Psoas muscle (tissue), 8 donors: ENCODE measurements at regions of chr4 and their contacts with region 1.

Region 1: DNA sequence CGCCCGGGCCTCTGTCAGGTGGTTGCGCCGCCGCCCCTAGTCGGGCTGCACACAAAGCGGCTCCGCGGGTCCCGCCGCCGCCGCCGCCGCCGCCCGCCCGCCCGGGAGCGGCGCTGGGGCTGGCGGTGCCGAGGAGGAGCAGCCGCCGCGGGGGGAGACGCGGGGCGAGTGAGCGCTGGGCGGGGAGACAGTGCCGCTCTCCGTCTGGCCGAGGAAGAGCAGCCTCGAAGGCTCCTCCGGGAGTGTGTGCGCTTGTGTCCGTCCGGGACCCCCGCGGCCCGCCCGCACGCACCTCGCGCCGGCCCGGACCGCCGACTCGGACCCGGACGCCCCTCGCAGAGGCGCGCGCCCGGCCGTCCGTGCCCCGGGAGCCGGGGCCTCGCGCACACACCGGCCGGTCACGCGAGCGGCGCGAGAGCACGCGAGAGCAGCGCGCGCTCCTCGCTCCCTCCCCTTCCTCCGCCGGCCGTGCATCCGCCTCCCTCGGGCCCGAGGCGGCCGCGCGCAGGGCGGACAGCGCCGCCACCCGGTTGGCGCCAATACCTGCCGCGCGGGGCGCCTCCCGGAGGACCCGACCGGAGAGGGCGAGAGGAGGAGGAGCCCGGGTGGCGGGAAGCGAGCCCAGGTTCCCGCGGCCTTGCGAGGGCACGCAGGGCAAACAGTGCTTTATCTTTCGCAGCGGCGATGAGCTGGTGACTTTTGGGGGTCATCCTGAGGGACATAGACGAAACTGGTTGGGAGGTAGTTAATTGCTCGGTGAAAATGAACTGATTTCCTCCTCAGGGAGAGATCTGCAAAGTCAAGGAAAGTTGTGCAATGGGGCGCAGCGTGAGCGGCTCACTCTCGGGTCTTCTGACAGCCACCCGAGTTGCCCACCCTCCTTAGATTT is at the start of gene PDS5A:
- DNase-seq: peak; percentile 90 to 94
- ATAC-seq: peak; percentile 94
- H3K4me3 ChIP-seq: peak within 1 kb of the TSS; percentile 85
- H3K27ac ChIP-seq: peak within 1 kb of the TSS; percentile 84
- H3K4me1 ChIP-seq: peaks cover 18% of the 10 kb centered on the region
- H3K27me3 ChIP-seq: no peaks in the 10 kb centered on the region
- CTCF ChIP-seq: peak; percentile 75
- total RNA-seq, gene PDS5A: 23.2 to 34.0 (median 30.8) TPM

Region 2: DNA sequence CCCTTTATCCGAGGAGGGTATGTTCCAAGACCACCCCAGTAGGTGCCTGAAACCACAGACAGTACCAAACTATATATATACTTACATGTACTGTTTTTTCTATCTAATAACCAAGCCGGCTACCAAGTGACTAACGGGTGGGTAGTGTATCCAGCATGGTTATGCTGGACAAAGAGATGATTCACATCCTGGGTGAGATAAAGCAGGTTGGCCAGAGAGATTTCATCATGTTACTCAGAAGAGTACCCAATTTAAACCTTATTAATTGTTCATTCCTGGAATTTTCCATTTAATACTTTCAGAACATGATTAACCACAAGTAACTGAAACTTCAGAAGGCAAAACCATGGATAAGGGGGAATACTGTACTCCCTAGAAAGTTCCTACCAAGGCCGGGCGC is 658.1 kb before region 1 on chr4:
- intact Hi-C with region 1: no loop called
- DNase-seq: no peak
- ATAC-seq: no peak
- H3K4me3 ChIP-seq: no peak overlapping the region
- H3K27ac ChIP-seq: no peak overlapping the region
- H3K4me1 ChIP-seq: no peaks in the 10 kb centered on the region
- H3K27me3 ChIP-seq: no peaks in the 10 kb centered on the region
- CTCF ChIP-seq: no peak

Region 3: GRCh38 chr4:39527273-39528060 is 450.3 kb before region 1 on chr4 and contains the start of gene UGDH:
- intact Hi-C with region 1: loop called in 1 of 2 experiments (anchors 2 kb)
- DNase-seq: peak; percentile 97 to 98
- ATAC-seq: peak; percentile 98 to 99 (median 98)
- H3K4me3 ChIP-seq: peak within 1 kb of the TSS; percentile 81
- H3K27ac ChIP-seq: peak within 1 kb of the TSS; percentile 94
- H3K4me1 ChIP-seq: peaks cover 25% of the 10 kb centered on the region
- H3K27me3 ChIP-seq: no peaks in the 10 kb centered on the region
- CTCF ChIP-seq: no peak
- total RNA-seq, gene UGDH: 7.7 to 9.8 (median 8.9) TPM

Region 4: GRCh38 chr4:39697740-39698423 is 279.9 kb before region 1 on chr4 and contains the start of gene UBE2K:
- intact Hi-C with region 1: loop called (anchors 2 kb)
- DNase-seq: peak; percentile 91 to 95
- ATAC-seq: peak; percentile 94 to 98 (median 96)
- H3K4me3 ChIP-seq: peak within 1 kb of the TSS; percentile 85
- H3K27ac ChIP-seq: peak within 1 kb of the TSS; percentile 90
- H3K4me1 ChIP-seq: peaks cover 23% of the 10 kb centered on the region
- H3K27me3 ChIP-seq: no peaks in the 10 kb centered on the region
- CTCF ChIP-seq: no peak
- total RNA-seq, gene UBE2K: 45.9 to 75.9 (median 61.5) TPM

Region 5: DNA sequence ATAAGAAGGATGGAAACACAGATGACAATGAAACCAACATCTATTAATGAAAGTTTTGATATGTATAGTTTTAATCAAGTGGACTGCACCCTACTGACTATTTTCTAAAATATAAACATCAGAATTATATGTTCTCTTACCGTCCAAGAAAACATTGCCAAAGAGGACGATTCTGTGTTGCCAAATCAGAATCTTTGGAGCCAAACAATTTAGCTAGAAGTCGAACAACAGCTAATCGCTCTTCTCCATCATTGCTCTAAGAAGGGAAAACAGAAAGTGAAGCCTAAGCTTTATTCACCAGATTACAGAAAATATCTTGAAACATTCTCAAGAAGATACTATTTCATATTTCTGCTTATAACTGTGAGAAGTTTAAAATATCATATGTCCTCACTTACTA is 64.3 kb before region 1 on chr4:
- intact Hi-C with region 1: loop called in 1 of 2 experiments (anchors 10 kb)
- DNase-seq: no peak
- ATAC-seq: no peak
- H3K4me3 ChIP-seq: no peak overlapping the region
- H3K27ac ChIP-seq: no peak overlapping the region
- H3K4me1 ChIP-seq: no peaks in the 10 kb centered on the region
- H3K27me3 ChIP-seq: no peaks in the 10 kb centered on the region
- CTCF ChIP-seq: no peak

Region 6: GRCh38 chr4:39937683-39938268 is 40.0 kb before region 1 on chr4:
- intact Hi-C with region 1: no loop called
- DNase-seq: no peak
- ATAC-seq: no peak
- H3K4me3 ChIP-seq: no peak overlapping the region
- H3K27ac ChIP-seq: no peak overlapping the region
- H3K4me1 ChIP-seq: peaks cover 17% of the 10 kb centered on the region
- H3K27me3 ChIP-seq: no peaks in the 10 kb centered on the region
- CTCF ChIP-seq: no peak